K562 (cell line): ENCODE measurements at regions of chr12 and their contacts with region 1.

Region 1: GRCh38 chr12:112012775-112013600 is at the starts of genes ERP29 and TMEM116:
- DNase-seq: peak; percentile 99 to 100 (median 99)
- ATAC-seq: peak; percentile 86
- H3K4me3 ChIP-seq: peak within 1 kb of the TSS; percentile 95
- H3K27ac ChIP-seq: peak within 1 kb of the TSS; percentile 99
- H3K4me1 ChIP-seq: peaks cover 33 to 34% of the 10 kb centered on the region in 2 experiments; a peak in 4 of 5 replicates
- H3K27me3 ChIP-seq: no peaks in the 10 kb centered on the region
- CTCF ChIP-seq: peak; percentile 62 to 74 (median 70); a peak in 5 of 6 replicates
- EP300 ChIP-seq: no peak; the same call in none of the 2 replicates
- POLR2A ChIP-seq: peak; percentile 97
- RAD21 ChIP-seq: peak; percentile 53 to 61
- polyA plus RNA-seq, gene ERP29: 42.4 to 146 TPM
- polyA plus RNA-seq, gene TMEM116: 19.2 to 22.9 TPM

Region 2: GRCh38 chr12:111819191-111820150 is 193.5 kb before region 1 on chr12:
- CTCF ChIA-PET with region 1: no interaction called
- POLR2A ChIA-PET with region 1: no interaction called
- in situ Hi-C with region 1: no loop called
- intact Hi-C with region 1: loop called (anchors 5 kb)
- DNase-seq: no peak
- ATAC-seq: no peak
- H3K4me3 ChIP-seq: no peak overlapping the region
- H3K27ac ChIP-seq: no peak overlapping the region
- H3K4me1 ChIP-seq: peaks cover 0 to 3% of the 10 kb centered on the region in 2 experiments; a peak in 1 of 5 replicates
- H3K27me3 ChIP-seq: peaks cover 0 to 10% of the 10 kb centered on the region in 2 experiments; a peak in 4 of 5 replicates
- CTCF ChIP-seq: no peak
- EP300 ChIP-seq: no peak
- POLR2A ChIP-seq: no peak
- RAD21 ChIP-seq: no peak

Region 3: DNA sequence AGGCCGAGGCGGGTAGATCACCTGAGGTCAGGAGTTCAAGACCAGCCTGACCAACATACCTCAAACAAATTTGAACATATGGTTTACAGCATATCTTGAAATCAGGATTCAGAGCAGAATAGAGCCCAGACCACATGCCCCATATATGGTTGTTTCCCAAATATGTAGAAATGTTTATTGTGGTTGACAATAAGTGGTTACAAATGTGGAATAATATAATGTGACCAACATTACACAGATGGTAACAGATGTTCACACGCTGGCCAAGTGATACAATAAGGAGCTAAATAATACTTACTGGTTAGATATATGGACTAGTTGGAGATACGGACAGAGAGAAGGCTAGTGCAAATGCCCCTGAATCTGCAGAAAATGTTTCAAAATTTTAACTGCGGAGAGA is 85.6 kb before region 1 on chr12:
- CTCF ChIA-PET with region 1: no interaction called
- POLR2A ChIA-PET with region 1: no interaction called
- in situ Hi-C with region 1: no loop called
- intact Hi-C with region 1: no loop called
- DNase-seq: no peak
- ATAC-seq: no peak
- H3K4me3 ChIP-seq: no peak overlapping the region
- H3K27ac ChIP-seq: no peak overlapping the region
- H3K4me1 ChIP-seq: no peaks in the 10 kb centered on the region
- H3K27me3 ChIP-seq: no peaks in the 10 kb centered on the region
- CTCF ChIP-seq: no peak
- EP300 ChIP-seq: no peak
- POLR2A ChIP-seq: no peak
- RAD21 ChIP-seq: no peak

Region 4: GRCh38 chr12:111942557-111942956 is 70.4 kb before region 1 on chr12:
- CTCF ChIA-PET with region 1: interaction called, 15 read pairs
- POLR2A ChIA-PET with region 1: interaction called, 4 read pairs
- in situ Hi-C with region 1: no loop called
- intact Hi-C with region 1: loop called (anchors 1 kb)
- DNase-seq: no peak
- ATAC-seq: no peak
- H3K4me3 ChIP-seq: no peak overlapping the region
- H3K27ac ChIP-seq: no peak overlapping the region
- H3K4me1 ChIP-seq: peaks cover 0 to 3% of the 10 kb centered on the region in 2 experiments; a peak in 1 of 5 replicates
- H3K27me3 ChIP-seq: no peaks in the 10 kb centered on the region
- CTCF ChIP-seq: no peak
- EP300 ChIP-seq: no peak
- POLR2A ChIP-seq: no peak
- RAD21 ChIP-seq: no peak

Region 5: DNA sequence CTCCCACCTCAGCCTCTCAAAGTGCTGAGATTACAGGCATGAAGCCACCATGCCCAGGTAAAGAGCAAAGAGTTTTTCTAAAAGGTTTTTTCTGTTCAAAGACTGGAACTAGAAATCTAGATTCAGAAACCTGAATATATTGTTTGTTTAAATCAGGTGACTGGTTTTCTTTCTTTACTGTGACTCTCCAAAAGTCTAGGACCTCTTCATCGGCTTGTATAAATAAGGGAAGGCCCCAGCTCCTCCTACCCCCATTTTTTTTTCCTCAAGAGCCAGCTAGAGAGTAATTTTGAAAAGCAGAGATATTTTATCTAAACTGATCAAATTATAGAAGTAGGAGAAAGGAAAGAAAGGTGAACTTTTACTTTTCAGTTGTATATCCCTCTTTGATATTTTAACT is 48.1 kb before region 1 on chr12:
- CTCF ChIA-PET with region 1: no interaction called
- POLR2A ChIA-PET with region 1: no interaction called
- in situ Hi-C with region 1: no loop called
- intact Hi-C with region 1: no loop called
- DNase-seq: no peak
- ATAC-seq: no peak
- H3K4me3 ChIP-seq: no peak overlapping the region
- H3K27ac ChIP-seq: no peak overlapping the region
- H3K4me1 ChIP-seq: peaks cover 0 to 12% of the 10 kb centered on the region in 2 experiments; a peak in 2 of 5 replicates
- H3K27me3 ChIP-seq: no peaks in the 10 kb centered on the region
- CTCF ChIP-seq: no peak
- EP300 ChIP-seq: no peak
- POLR2A ChIP-seq: no peak
- RAD21 ChIP-seq: no peak

Region 6: GRCh38 chr12:111993292-111994150 is 19.5 kb before region 1 on chr12:
- CTCF ChIA-PET with region 1: no interaction called
- POLR2A ChIA-PET with region 1: interaction called, 10 read pairs
- in situ Hi-C with region 1: no loop called
- intact Hi-C with region 1: loop called (anchors 2 kb)
- DNase-seq: peak in 1 of 4 experiments; percentile 58
- ATAC-seq: peak; percentile 71
- H3K4me3 ChIP-seq: no peak overlapping the region
- H3K27ac ChIP-seq: peak overlapping the region; percentile 71
- H3K4me1 ChIP-seq: peaks cover 9 to 27% of the 10 kb centered on the region in 2 experiments; a peak in 3 of 5 replicates
- H3K27me3 ChIP-seq: no peaks in the 10 kb centered on the region
- CTCF ChIP-seq: no peak
- EP300 ChIP-seq: no peak
- POLR2A ChIP-seq: no peak
- RAD21 ChIP-seq: no peak

Region 7: DNA sequence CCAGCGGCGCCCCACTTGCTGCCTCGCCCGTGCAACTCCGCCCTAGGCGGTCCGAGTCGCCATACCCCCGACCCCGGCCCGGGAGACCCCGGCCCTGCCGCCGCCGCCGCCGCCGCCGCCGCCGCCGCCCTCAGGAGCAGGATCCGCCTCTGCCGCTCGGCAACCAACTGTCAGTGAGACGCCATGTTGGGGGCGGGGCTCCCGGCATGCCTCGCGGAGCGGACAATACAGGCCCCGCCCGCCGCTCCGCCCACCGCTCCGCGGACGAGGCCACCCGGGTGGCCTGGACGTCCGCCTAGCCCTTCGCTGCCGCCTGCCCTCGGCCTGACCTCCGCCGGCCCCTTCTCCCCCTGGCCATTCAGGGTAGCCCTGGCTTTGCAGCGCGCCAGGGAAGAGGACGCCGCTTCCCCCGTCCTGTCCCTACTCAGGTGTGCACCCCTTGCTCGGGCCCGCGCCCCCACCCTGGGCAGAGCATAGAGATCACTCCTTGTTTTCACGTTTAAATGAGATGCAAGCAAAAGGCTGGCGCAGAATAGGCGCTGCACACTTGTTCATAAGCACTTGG is 369.3 kb after region 1 on chr12 and contains the start of gene HECTD4:
- CTCF ChIA-PET with region 1: no interaction called
- POLR2A ChIA-PET with region 1: no interaction called
- in situ Hi-C with region 1: no loop called
- intact Hi-C with region 1: loop called (anchors 10 kb)
- DNase-seq: peak; percentile 95 to 97 (median 96)
- ATAC-seq: peak; percentile 96
- H3K4me3 ChIP-seq: peak within 1 kb of the TSS; percentile 98
- H3K27ac ChIP-seq: peak within 1 kb of the TSS; percentile 89
- H3K4me1 ChIP-seq: peaks cover 24 to 32% of the 10 kb centered on the region in 2 experiments
- H3K27me3 ChIP-seq: no peaks in the 10 kb centered on the region
- CTCF ChIP-seq: no peak
- EP300 ChIP-seq: no peak
- POLR2A ChIP-seq: peak; percentile 90
- RAD21 ChIP-seq: no peak
- polyA plus RNA-seq, gene HECTD4: 3.5 to 4.5 TPM